ENCODE measurements at regions of chrX and their contacts with region 1.

Region 1: GRCh38 chrX:40108959-40109287 is 11.2 kb upstream of the BCOR start:
- DNase-seq: peak; percentile 86 to 89 (median 86)
- ATAC-seq: peak; percentile 55 to 68 (median 58)
- H3K4me3 ChIP-seq: peak overlapping the region; percentile 33 to 63 (median 60)
- H3K27ac ChIP-seq: peak overlapping the region; percentile 74 to 91 (median 79)
- H3K4me1 ChIP-seq: peaks cover 0 to 28% (median 3%) of the 10 kb centered on the region in 4 donors
- H3K27me3 ChIP-seq: no peaks in the 10 kb centered on the region
- CTCF ChIP-seq: no peak
- POLR2A ChIP-seq: peak; percentile 69

Region 2: GRCh38 chrX:39855748-39856129 is 253.2 kb before region 1 on chrX:
- intact Hi-C with region 1: no loop called
- DNase-seq: no peak
- ATAC-seq: peak in 3 of 4 donors; percentile 15 to 21 (median 17)
- H3K4me3 ChIP-seq: no peak overlapping the region
- H3K27ac ChIP-seq: no peak overlapping the region
- H3K4me1 ChIP-seq: no peaks in the 10 kb centered on the region
- H3K27me3 ChIP-seq: no peaks in the 10 kb centered on the region
- CTCF ChIP-seq: no peak
- POLR2A ChIP-seq: no peak

Region 3: DNA sequence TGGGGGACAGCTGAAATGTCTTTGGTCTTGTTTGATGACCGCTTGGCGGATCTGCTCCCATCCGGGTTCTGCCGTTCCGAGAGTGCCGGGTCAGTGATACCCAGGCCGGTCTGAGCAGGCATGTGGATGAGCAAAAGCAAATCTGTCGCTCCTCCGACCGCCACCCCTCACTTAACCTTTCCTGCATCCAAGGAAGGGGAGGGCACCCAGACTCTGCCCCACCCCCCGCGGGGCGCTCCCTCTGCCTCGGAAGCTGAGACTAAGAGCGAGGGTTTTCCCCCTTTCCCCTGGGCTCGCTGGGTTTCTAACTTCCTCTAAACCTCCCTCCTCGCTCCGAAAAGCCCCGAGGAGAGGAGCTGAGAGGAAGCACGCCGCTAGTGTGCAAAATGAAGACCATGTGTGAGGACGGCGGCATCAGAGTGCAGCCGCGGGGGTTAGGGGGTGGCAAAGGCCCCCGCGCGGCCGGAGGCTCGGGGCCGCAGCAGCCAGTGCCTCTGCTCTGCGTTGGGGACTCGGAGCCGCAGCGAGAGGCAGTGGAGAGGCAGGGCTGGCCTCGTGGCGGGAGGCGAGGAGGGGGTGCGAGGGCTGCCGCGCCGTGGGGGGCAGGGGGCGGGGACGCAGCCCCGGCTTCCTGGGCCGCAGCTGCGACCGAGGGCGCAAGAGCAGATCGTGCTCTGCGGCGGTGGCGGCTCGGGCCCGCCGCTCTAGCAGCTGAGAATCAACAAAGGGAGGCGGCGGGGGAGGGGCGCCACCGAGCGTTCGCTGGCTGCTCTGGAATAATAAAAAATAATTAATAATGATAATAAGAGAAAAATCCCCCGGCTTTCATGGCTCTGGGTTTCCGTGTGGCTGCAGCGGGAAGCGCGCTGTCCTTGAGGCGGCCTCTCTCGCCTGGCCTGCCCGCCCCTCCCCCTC is 44.7 kb after region 1 on chrX:
- intact Hi-C with region 1: loop called (anchors 5 to 10 kb)
- DNase-seq: peak in 2 of 3 donors; percentile 58 to 64
- ATAC-seq: peak in 3 of 4 donors; percentile 13 to 17 (median 15)
- H3K4me3 ChIP-seq: peak overlapping the region; percentile 27 to 47 (median 46)
- H3K27ac ChIP-seq: peak overlapping the region in 2 of 3 donors; percentile 10 to 86
- H3K4me1 ChIP-seq: peaks cover 0 to 12% (median 3%) of the 10 kb centered on the region in 4 donors
- H3K27me3 ChIP-seq: no peaks in the 10 kb centered on the region
- CTCF ChIP-seq: peak in 3 of 4 donors; percentile 5 to 21 (median 13)
- POLR2A ChIP-seq: no peak

Region 4: GRCh38 chrX:40201329-40201885 is 92.5 kb after region 1 on chrX:
- intact Hi-C with region 1: no loop called
- DNase-seq: no peak
- ATAC-seq: no peak
- H3K4me3 ChIP-seq: no peak overlapping the region
- H3K27ac ChIP-seq: no peak overlapping the region
- H3K4me1 ChIP-seq: no peaks in the 10 kb centered on the region
- H3K27me3 ChIP-seq: no peaks in the 10 kb centered on the region
- CTCF ChIP-seq: no peak
- POLR2A ChIP-seq: no peak

Region 5: DNA sequence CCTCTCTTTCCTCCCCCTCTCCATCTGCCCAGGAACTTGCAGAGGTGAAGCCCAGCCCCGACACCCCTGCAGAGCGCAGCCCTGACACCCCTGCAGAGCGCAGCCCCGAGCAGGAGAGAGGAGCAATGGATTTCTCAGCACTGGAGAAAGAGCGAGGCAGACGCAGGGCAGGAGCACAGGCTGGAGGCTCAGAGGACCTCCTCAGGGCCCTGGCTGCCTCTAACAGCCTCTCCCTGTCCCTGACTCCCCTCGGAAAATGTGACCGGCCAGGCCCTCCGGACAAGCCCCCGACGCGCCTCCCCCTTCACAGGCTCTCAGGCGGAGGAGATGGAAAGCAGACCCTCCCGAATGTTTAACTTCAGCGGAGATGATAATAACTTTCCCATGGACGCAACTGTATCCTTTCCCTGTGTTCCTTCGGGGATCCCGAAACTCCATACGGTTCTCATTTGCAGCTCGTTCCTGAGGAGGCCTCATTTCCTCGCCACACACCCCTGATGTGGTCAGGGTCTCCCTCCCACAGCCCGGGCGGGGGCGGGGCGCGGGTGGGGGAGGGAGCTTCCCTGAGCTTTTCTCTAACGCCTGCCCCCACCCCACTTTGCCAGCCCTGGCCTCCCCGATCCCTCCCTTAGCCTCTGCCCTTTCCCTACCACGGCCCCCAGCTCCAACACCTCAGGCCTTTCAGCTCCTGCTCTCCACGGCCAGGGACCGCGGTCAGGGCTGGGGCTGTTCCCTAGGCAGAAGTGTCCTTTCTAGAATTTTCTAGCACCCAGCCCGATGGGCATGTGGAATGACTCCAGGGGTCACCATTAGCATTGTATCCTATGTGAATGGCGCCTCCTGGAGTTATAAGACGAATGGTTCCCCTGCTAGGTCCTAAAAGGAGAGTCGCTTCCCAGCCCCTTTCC is 189.9 kb after region 1 on chrX:
- intact Hi-C with region 1: no loop called
- DNase-seq: no peak
- ATAC-seq: peak in 1 of 4 donors; percentile 13
- H3K4me3 ChIP-seq: no peak overlapping the region
- H3K27ac ChIP-seq: no peak overlapping the region
- H3K4me1 ChIP-seq: no peaks in the 10 kb centered on the region
- H3K27me3 ChIP-seq: peaks cover 0 to 7% of the 10 kb centered on the region in 2 donors
- CTCF ChIP-seq: no peak
- POLR2A ChIP-seq: no peak

Measured in right lobe of liver (tissue), 6 donors.